Activated CD4-positive, alpha-beta T cell treated with anti-CD3 and anti-CD28 coated beads, Interleukin-2, amount 10 ng/mL, durations not matched to agents 24 days and 14 days (primary cell): ENCODE measurements at regions of chr17 and their contacts with region 1.

Region 1: DNA sequence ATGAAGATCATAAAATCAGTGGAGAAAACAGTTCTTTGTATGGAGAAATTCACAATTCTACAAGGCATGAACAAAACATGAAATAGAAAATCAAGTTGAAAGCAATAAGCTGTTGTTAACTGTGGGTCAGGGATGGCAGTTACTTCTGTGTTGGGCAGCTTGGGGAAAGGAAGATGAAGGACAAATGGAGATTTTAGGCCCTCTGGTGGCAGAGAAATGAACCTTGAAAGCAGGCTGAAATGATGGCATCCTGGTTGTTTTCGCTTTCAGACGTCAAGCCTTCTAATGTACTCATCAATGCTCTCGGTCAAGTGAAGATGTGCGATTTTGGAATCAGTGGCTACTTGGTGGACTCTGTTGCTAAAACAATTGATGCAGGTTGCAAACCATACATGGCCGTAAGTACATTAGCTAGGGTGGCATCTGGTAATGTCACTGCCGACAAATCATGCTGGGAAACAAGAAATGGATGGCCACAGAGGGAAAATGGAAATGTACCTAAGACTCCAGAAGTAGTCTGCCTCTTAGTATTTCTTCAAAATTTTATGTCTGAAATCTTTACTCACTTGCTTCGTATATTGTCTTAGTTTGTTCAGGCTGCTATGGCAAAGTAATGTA is 108.9 kb downstream of the MAP2K6 start:
- DNase-seq: peak; percentile 67
- H3K4me3 Mint-ChIP-seq: no peak overlapping the region
- H3K27ac Mint-ChIP-seq: no peak overlapping the region
- H3K4me1 Mint-ChIP-seq: peaks cover 3% of the 10 kb centered on the region
- H3K27me3 Mint-ChIP-seq: no peaks in the 10 kb centered on the region

Region 2: GRCh38 chr17:69335058-69335457 is 188.3 kb before region 1 on chr17:
- intact Hi-C with region 1: loop called (anchors 10 kb)
- DNase-seq: no peak
- H3K4me3 Mint-ChIP-seq: no peak overlapping the region
- H3K27ac Mint-ChIP-seq: no peak overlapping the region
- H3K4me1 Mint-ChIP-seq: peaks cover 3% of the 10 kb centered on the region
- H3K27me3 Mint-ChIP-seq: peaks cover 27% of the 10 kb centered on the region

Region 3: DNA sequence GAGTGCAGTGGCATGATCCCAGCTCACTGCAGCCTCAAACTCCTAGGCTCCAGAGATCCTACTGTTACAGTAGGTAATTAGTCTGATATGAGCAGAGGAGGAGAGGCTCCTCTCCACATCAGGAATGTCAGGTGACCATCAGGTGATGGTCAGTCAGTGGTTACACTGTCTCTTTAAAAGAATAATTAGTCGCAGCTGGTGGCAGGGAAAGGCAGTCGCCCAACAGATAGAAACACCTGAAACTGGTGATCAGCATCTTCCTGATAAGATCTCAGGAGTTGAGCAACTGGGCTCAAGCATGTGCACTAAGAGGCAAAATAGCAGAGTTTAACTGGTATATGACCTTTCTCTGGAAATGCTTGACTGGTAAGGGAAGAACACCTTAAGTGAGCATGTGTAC is 174.9 kb before region 1 on chr17:
- intact Hi-C with region 1: no loop called
- DNase-seq: no peak
- H3K4me3 Mint-ChIP-seq: no peak overlapping the region
- H3K27ac Mint-ChIP-seq: no peak overlapping the region
- H3K4me1 Mint-ChIP-seq: no peaks in the 10 kb centered on the region
- H3K27me3 Mint-ChIP-seq: peaks cover 20% of the 10 kb centered on the region

Region 4: DNA sequence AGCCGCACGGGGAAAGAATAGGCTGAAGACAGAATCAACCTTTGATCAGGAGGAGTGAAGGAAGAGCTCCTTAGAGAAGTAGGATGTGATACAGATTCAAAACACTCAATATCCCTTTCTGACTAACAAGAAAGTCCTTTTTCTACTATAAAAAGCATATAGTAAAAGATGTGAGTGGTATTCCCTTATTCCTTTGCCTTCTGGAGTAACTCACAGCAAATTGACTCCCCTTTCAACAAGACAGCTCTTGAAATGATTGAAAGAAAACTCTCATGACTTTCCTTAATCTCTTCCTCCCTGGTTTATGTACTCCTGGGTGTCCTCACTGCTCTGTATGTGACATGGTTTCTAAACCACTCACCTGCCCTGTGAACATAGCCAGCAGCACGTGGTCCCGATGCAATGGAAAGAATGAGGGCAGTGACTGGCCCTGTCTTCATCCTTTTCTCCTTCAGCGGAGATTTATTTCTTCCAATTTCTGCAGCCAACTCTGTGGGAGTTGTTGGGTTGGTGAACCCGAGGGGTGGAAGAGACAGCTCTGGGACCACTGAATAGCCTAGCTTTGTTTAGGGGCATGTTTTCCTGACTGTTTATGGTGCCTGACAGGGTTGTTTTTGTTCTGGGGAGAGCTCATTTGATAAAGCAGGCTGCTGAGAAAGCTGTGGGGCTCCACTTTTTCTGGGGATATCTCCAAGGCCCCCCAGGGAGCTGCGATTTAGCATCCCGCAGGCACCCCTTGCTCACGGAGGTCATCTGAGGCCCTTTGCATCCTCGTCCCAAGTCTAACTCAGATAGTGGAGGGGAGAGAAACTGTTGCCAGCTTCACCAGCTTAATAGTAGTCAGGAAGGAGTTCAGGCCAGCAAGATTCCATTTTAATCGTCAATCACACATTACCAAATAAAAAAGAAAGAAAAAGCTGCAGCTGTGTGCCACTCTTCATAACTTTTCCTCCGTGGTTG is 62.1 kb before region 1 on chr17:
- intact Hi-C with region 1: no loop called
- DNase-seq: no peak
- H3K4me3 Mint-ChIP-seq: no peak overlapping the region
- H3K27ac Mint-ChIP-seq: no peak overlapping the region
- H3K4me1 Mint-ChIP-seq: peaks cover 5% of the 10 kb centered on the region
- H3K27me3 Mint-ChIP-seq: no peaks in the 10 kb centered on the region

Region 5: DNA sequence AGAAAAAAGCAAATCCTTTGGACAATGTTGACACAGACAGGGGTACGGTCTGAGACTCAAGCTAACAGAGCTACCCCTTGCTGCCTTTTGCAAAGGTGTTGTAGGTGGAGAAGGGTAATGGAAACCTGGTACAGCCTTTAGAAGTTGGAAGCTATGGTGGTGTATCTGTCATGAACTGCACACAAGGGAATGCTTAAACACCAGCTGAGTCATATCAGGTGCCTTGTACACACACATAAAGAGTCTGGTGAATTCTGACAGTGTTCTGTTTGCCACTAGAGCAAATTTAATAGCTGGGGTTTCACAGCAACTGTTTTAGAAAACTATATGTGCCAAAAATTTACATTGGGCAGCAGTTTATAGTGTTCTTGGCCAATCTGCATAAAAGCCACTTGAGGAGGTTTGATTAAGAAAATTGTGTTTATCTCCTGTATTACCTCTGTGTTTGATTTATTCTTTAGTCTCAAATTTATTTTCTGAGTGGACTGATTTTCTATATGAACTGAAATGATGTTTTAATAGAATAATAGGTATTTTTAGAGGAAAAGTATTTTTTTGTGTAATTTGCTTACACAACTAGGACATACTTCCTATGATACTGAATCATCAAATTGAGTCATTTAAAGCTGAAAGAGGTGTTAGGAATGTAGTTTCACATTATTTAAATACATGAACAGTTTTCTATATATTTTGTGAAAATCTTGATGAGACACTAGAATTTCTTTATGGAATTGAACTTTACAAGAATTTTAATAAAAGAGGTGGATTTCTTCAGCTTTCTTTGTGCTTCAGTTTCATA is 28.1 kb after region 1 on chr17:
- intact Hi-C with region 1: no loop called
- DNase-seq: no peak
- H3K4me3 Mint-ChIP-seq: no peak overlapping the region
- H3K27ac Mint-ChIP-seq: no peak overlapping the region
- H3K4me1 Mint-ChIP-seq: no peaks in the 10 kb centered on the region
- H3K27me3 Mint-ChIP-seq: no peaks in the 10 kb centered on the region